ENCODE measurements at regions of chr7 and their contacts with region 1.

Region 1: DNA sequence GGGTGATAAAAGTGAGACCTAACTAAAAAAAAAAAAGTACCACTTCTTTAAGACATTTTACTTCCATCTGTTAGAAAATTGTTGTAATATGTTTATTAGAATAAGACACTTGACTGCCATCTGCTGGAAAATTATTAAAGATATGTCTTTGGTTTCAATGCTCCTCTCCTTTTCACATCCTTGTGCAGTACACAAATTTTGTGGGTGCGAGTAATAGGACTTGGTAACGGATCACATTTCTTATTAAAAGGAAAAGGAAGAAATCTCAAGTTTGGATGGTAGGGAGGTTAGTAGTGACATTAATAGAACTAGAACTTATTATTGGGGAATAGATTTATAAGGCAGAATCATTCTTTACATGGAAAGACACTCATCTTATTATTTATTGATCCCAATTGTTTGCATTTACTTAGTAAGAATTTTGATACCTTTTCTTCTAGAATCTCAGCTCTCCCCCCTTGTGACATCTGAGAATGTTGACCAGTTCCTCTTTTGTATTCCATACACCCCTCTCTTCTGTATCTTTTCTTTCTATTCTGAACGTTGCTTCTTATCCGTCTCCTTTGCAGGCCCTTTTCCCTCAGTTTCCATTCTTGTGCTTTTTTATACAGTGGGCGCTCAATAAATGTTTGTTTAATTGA is 43.1 kb upstream of the RPA3 start:
- DNase-seq: peak in 3 of 4 experiments; percentile 8 to 31 (median 10)
- ATAC-seq: peak; percentile 69; the same call in 2 of the 3 replicates
- H3K4me3 ChIP-seq: no peak overlapping the region
- H3K27ac ChIP-seq: no peak overlapping the region
- H3K4me1 ChIP-seq: no peaks in the 10 kb centered on the region; a peak in 1 of 5 replicates
- H3K27me3 ChIP-seq: no peaks in the 10 kb centered on the region
- CTCF ChIP-seq: peak in 1 of 3 experiments; percentile 42; a peak in 3 of 6 replicates
- EP300 ChIP-seq: no peak
- POLR2A ChIP-seq: no peak
- RAD21 ChIP-seq: peak; percentile 18 to 40; a peak in 2 of 4 replicates

Region 2: GRCh38 chr7:7595451-7595850 is 166.0 kb before region 1 on chr7:
- CTCF ChIA-PET with region 1: no interaction called
- POLR2A ChIA-PET with region 1: no interaction called
- in situ Hi-C with region 1: no loop called
- intact Hi-C with region 1: loop called (anchors 10 kb)
- DNase-seq: peak; percentile 14 to 40 (median 24)
- ATAC-seq: peak; percentile 61; the same call in 2 of the 3 replicates
- H3K4me3 ChIP-seq: no peak overlapping the region
- H3K27ac ChIP-seq: no peak overlapping the region
- H3K4me1 ChIP-seq: no peaks in the 10 kb centered on the region
- H3K27me3 ChIP-seq: no peaks in the 10 kb centered on the region
- CTCF ChIP-seq: peak in 1 of 3 experiments; percentile 52; a peak in 2 of 6 replicates
- EP300 ChIP-seq: no peak
- POLR2A ChIP-seq: no peak
- RAD21 ChIP-seq: peak; percentile 53 to 75

Region 3: GRCh38 chr7:8125680-8126444 is 364.4 kb after region 1 on chr7:
- CTCF ChIA-PET with region 1: no interaction called
- POLR2A ChIA-PET with region 1: no interaction called
- in situ Hi-C with region 1: no loop called
- intact Hi-C with region 1: no loop called
- DNase-seq: no peak
- ATAC-seq: peak; percentile 34
- H3K4me3 ChIP-seq: no peak overlapping the region
- H3K27ac ChIP-seq: no peak overlapping the region
- H3K4me1 ChIP-seq: peaks cover 2 to 5% of the 10 kb centered on the region in 2 experiments; a peak in 4 of 5 replicates
- H3K27me3 ChIP-seq: no peaks in the 10 kb centered on the region
- CTCF ChIP-seq: no peak
- EP300 ChIP-seq: no peak
- POLR2A ChIP-seq: no peak
- RAD21 ChIP-seq: no peak

Region 4: DNA sequence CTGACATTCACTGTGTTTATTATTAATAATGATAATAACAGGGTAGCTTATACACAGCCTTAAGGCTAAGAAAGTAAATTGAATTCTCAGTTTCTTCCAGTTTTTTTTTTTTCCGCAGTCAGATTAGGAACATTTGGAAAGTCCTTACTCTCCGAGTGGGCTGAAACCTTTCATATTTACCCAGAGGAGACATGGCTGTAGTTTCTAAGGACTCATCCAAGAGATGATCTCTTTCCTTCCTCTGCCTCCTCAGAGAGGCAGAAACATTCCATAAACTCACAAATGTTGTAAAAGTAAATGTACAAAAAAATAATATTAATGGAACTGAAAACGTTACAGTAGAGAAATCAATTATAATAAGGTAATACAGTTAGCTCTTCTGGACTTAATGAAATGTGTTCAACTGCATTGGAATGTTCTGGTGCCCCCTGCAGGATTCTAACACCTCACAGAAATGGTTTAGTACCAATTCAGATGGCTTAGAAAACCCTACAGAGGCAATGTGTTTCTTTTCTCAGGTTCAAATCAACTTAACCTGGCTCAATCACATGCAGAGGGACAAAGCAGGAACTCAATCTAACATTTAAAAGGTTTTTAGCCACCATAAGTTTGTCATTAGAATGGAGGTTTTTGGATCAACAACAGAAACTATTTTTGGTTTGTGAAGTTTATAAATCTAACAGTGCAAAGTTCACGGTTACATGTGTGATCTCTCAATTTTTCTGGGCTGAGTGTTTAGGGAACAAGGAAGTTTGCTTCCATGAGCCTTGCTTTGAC is 428.8 kb after region 1 on chr7:
- CTCF ChIA-PET with region 1: no interaction called
- POLR2A ChIA-PET with region 1: no interaction called
- in situ Hi-C with region 1: no loop called
- intact Hi-C with region 1: loop called (anchors 5 kb)
- DNase-seq: peak in 1 of 4 experiments; percentile 71
- ATAC-seq: peak; percentile 88
- H3K4me3 ChIP-seq: no peak overlapping the region
- H3K27ac ChIP-seq: no peak overlapping the region
- H3K4me1 ChIP-seq: peaks cover 0 to 3% of the 10 kb centered on the region in 2 experiments; a peak in 1 of 5 replicates
- H3K27me3 ChIP-seq: no peaks in the 10 kb centered on the region
- CTCF ChIP-seq: peak; percentile 39 to 82 (median 59)
- EP300 ChIP-seq: no peak
- POLR2A ChIP-seq: no peak
- RAD21 ChIP-seq: peak; percentile 89 to 92

Region 5: DNA sequence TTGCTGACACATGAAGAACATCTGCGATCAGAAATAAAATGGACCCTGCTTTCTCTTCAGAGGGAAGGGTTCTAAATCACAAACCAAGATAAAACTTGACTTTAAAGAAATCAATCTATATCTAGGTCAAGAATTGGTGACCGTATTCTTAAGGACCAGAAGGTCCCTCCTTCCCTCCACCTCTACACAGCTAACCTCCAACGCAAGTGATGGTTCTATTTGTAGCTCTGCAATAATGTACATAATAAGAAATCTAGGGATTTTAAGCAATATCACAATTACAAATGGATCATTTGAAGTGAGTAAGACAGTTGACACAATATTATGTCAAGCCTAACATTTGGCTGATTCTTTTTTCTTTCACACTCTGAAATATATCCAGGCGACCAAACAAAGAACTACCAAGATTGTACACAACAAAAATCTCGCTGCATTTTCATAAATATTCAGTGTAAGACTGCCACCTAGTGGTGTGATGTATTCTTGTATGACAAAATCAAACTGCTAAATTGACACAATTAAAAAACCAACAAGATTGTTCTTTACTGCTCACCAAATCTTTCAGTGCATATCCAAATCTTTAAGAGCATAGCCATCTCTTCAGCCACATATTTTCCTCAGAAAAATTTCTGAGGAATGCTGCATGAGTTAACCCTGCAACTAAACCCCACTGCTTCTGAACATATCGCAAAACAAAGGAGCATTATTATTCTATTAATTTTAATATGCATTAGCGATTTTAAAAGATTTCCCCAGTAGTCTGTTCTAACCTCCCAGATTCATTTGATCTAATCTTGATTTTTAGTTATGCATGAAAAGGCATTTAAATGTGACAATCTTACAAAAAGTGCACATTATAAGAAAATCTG is 456.0 kb after region 1 on chr7:
- CTCF ChIA-PET with region 1: no interaction called
- POLR2A ChIA-PET with region 1: no interaction called
- in situ Hi-C with region 1: no loop called
- intact Hi-C with region 1: loop called (anchors 10 kb)
- DNase-seq: peak; percentile 38 to 74 (median 39)
- ATAC-seq: peak; percentile 70
- H3K4me3 ChIP-seq: no peak overlapping the region
- H3K27ac ChIP-seq: no peak overlapping the region
- H3K4me1 ChIP-seq: no peaks in the 10 kb centered on the region
- H3K27me3 ChIP-seq: no peaks in the 10 kb centered on the region
- CTCF ChIP-seq: peak; percentile 35 to 74 (median 53); a peak in 4 of 6 replicates
- EP300 ChIP-seq: no peak
- POLR2A ChIP-seq: no peak
- RAD21 ChIP-seq: peak; percentile 85 to 86

Measured in K562 (cell line).